GM12878 (cell line): ENCODE measurements at regions of chr12 and their contacts with region 1.

Region 1: GRCh38 chr12:67698672-67699581 is 50.4 kb downstream of the DYRK2 start:
- DNase-seq: peak; percentile 98
- ATAC-seq: peak; percentile 96
- H3K4me3 ChIP-seq: no peak overlapping the region
- H3K27ac ChIP-seq: peak overlapping the region; percentile 64
- H3K4me1 ChIP-seq: peaks cover 28% of the 10 kb centered on the region
- H3K27me3 ChIP-seq: peaks cover 0 to 2% of the 10 kb centered on the region in 2 experiments; a peak in 1 of 4 replicates
- CTCF ChIP-seq: no peak
- EP300 ChIP-seq: peak; percentile 43 to 93; a peak in 3 of 4 replicates
- POLR2A ChIP-seq: no peak
- RAD21 ChIP-seq: peak; percentile 21

Region 2: GRCh38 chr12:67648521-67649260 is 50.2 kb before region 1 on chr12 and contains the start of gene DYRK2:
- CTCF ChIA-PET with region 1: interaction called, 3 read pairs
- POLR2A ChIA-PET with region 1: no interaction called
- RAD21 ChIA-PET with region 1: no interaction called
- SMC1A ChIA-PET with region 1: no interaction called
- in situ Hi-C with region 1: no loop called
- intact Hi-C with region 1: loop called (anchors 2 kb)
- DNase-seq: no peak
- ATAC-seq: peak; percentile 56
- H3K4me3 ChIP-seq: peak within 1 kb of the TSS; percentile 100
- H3K27ac ChIP-seq: peak within 1 kb of the TSS; percentile 70
- H3K4me1 ChIP-seq: peaks cover 6% of the 10 kb centered on the region
- H3K27me3 ChIP-seq: no peaks in the 10 kb centered on the region
- CTCF ChIP-seq: 0 out of 6 replicates have a peak, but pooled peaks of 1 of the 3 experiments have one; percentile 3
- EP300 ChIP-seq: no peak
- POLR2A ChIP-seq: peak; percentile 94
- RAD21 ChIP-seq: no peak
- polyA plus RNA-seq, gene DYRK2: 3.1 to 3.2 TPM

Region 3: DNA sequence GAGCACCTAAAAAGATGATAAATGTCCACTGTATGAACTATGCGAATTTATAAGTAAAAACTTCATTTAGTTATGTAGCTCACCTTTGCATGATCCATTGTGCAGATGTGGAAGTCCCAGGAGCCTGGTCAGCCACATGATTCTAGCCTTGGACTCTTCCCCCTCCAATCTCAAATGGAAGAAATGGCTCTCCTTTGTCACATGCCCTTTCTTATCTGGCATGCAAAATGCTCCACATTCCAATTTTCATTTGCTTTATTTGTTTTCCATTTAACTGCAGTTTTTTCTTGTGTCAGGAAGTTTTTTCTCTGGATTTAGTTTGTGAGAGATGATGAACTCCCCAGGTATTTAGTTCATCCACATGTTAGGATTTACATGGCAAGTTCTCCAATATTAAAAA is 23.4 kb after region 1 on chr12:
- CTCF ChIA-PET with region 1: no interaction called
- POLR2A ChIA-PET with region 1: no interaction called
- RAD21 ChIA-PET with region 1: no interaction called
- SMC1A ChIA-PET with region 1: no interaction called
- in situ Hi-C with region 1: no loop called
- intact Hi-C with region 1: no loop called
- DNase-seq: no peak
- ATAC-seq: no peak
- H3K4me3 ChIP-seq: no peak overlapping the region
- H3K27ac ChIP-seq: no peak overlapping the region
- H3K4me1 ChIP-seq: no peaks in the 10 kb centered on the region
- H3K27me3 ChIP-seq: no peaks in the 10 kb centered on the region; a peak in 2 of 4 replicates
- CTCF ChIP-seq: no peak
- EP300 ChIP-seq: no peak
- POLR2A ChIP-seq: no peak
- RAD21 ChIP-seq: no peak

Region 4: GRCh38 chr12:67758119-67758518 is 59.2 kb after region 1 on chr12:
- CTCF ChIA-PET with region 1: no interaction called
- POLR2A ChIA-PET with region 1: no interaction called
- RAD21 ChIA-PET with region 1: no interaction called
- SMC1A ChIA-PET with region 1: no interaction called
- in situ Hi-C with region 1: no loop called
- intact Hi-C with region 1: loop called (anchors 5 kb)
- DNase-seq: peak; percentile 42
- ATAC-seq: peak; percentile 99
- H3K4me3 ChIP-seq: no peak overlapping the region
- H3K27ac ChIP-seq: no peak overlapping the region
- H3K4me1 ChIP-seq: peaks cover 20% of the 10 kb centered on the region; the same call in 1 of the 2 replicates
- H3K27me3 ChIP-seq: no peaks in the 10 kb centered on the region
- CTCF ChIP-seq: no peak
- EP300 ChIP-seq: peak in 1 of 2 experiments; percentile 13; a peak in 1 of 4 replicates
- POLR2A ChIP-seq: no peak
- RAD21 ChIP-seq: no peak